ENCODE measurements at regions of chr22 and their contacts with region 1.

Region 1: DNA sequence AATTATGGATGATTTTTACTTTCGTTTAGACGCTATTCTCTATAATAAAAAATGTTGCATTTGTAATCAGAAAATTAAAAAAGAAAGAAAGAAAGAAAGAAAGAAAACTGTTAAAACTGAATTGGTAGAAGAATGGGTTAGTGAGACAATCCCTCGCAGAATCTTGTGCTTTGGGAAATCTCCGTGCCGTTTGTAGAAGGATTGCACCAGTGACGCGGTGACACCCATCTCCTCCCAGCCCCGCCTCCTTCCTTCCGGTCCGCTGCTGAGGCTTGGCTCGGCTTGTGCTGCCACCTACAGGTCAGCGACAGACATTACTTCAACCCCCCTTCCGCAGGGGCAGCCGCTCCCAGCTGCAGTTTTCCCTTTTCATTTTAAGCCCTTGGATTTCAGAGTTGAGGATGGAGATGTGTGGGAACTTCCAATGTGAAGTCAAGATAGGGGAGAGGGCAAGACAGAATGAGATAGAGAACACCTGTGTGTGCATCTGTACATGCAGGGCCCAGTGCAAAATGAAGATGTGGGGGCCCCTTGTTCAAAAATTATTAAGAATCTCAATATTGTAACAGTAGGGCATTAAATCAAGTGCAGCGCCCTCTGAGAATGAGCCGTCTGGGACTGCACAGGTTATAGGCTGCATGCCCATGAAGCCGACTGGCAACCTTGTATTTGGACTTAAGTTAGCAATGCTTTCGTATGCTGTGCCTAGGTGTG is 41.1 kb downstream of the TST start:
- DNase-seq: peak; percentile 92
- H3K4me3 Mint-ChIP-seq: peak overlapping the region; percentile 82
- H3K27ac Mint-ChIP-seq: peak overlapping the region; percentile 81
- H3K4me1 Mint-ChIP-seq: peaks cover 17% of the 10 kb centered on the region
- H3K27me3 Mint-ChIP-seq: peaks cover 9% of the 10 kb centered on the region

Region 2: GRCh38 chr22:36757668-36758211 is 220.4 kb before region 1 on chr22:
- CTCF ChIA-PET with region 1: interaction called, 15 read pairs
- POLR2A ChIA-PET with region 1: no interaction called
- DNase-seq: peak; percentile 81
- H3K4me3 Mint-ChIP-seq: no peak overlapping the region
- H3K27ac Mint-ChIP-seq: no peak overlapping the region
- H3K4me1 Mint-ChIP-seq: no peaks in the 10 kb centered on the region
- H3K27me3 Mint-ChIP-seq: peaks cover 12% of the 10 kb centered on the region

Region 3: DNA sequence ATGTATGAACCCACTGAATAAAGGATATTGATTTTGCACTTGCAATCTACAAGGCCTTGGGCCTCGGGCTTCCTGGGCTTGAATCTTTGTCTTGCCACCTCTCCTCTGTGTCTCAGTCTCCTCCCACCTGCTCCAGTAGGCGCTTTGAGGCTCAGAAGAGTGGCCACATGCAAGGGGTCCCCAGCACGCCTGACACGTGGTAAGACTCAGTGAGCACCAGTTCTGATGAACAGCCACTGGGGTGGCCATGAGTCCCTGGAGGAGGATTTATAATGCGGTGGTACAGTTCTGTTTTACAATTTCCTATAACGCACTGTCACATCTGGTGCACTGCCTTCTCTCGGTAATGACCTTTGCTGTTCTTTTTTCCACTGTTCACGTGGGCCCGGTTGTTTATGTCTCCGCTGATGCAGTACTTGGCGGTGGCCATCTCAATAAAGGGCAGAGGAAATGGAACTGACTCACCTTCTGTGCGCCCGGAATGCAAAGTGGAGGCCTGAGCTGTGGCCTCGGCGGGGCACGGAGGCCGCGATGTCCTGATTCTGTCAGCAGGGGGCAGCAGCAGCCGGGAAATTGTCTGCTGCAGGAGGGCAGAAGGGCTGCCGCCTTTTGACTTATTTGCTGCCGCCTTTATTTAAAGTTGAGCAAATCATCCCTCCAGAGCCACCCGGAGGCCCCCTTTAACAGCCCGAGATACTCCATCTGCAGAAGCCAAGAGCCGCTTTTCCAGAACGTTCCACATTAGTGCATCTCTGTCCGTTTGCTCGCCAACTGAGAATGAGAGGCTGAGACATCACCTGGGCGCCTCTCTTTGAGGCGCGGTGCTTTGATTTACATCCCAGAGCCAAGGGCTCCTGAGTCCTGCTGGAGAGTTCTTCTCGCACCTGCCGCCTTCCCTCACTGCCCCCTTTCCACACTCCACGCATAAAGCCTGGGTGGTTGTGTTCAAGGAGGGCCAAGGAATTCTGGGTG is 196.2 kb before region 1 on chr22:
- CTCF ChIA-PET with region 1: interaction called, 28 read pairs
- POLR2A ChIA-PET with region 1: interaction called, 6 read pairs
- DNase-seq: peak; percentile 93
- H3K4me3 Mint-ChIP-seq: peak overlapping the region; percentile 4
- H3K27ac Mint-ChIP-seq: peak overlapping the region; percentile 71
- H3K4me1 Mint-ChIP-seq: peaks cover 32% of the 10 kb centered on the region
- H3K27me3 Mint-ChIP-seq: peaks cover 9% of the 10 kb centered on the region

Region 4: GRCh38 chr22:36873680-36874537 is 104.2 kb before region 1 on chr22:
- CTCF ChIA-PET with region 1: interaction called, 10 read pairs
- POLR2A ChIA-PET with region 1: interaction called, 6 read pairs
- DNase-seq: peak; percentile 61
- H3K4me3 Mint-ChIP-seq: peak overlapping the region; percentile 14
- H3K27ac Mint-ChIP-seq: peak overlapping the region; percentile 90
- H3K4me1 Mint-ChIP-seq: peaks cover 37% of the 10 kb centered on the region
- H3K27me3 Mint-ChIP-seq: no peaks in the 10 kb centered on the region

Region 5: GRCh38 chr22:36966851-36967540 is 11.1 kb before region 1 on chr22:
- CTCF ChIA-PET with region 1: interaction called, 11 read pairs
- POLR2A ChIA-PET with region 1: no interaction called
- DNase-seq: no peak
- H3K4me3 Mint-ChIP-seq: no peak overlapping the region
- H3K27ac Mint-ChIP-seq: no peak overlapping the region
- H3K4me1 Mint-ChIP-seq: no peaks in the 10 kb centered on the region
- H3K27me3 Mint-ChIP-seq: peaks cover 11% of the 10 kb centered on the region

Region 6: GRCh38 chr22:37166675-37167066 is 188.6 kb after region 1 on chr22:
- CTCF ChIA-PET with region 1: no interaction called
- POLR2A ChIA-PET with region 1: no interaction called
- DNase-seq: peak; percentile 87
- H3K4me3 Mint-ChIP-seq: peak overlapping the region; percentile 71
- H3K27ac Mint-ChIP-seq: peak overlapping the region; percentile 94
- H3K4me1 Mint-ChIP-seq: peaks cover 85% of the 10 kb centered on the region
- H3K27me3 Mint-ChIP-seq: no peaks in the 10 kb centered on the region